Motor neuron (in vitro differentiated cells): ENCODE measurements at regions of chrX and their contacts with region 1.

Region 1: DNA sequence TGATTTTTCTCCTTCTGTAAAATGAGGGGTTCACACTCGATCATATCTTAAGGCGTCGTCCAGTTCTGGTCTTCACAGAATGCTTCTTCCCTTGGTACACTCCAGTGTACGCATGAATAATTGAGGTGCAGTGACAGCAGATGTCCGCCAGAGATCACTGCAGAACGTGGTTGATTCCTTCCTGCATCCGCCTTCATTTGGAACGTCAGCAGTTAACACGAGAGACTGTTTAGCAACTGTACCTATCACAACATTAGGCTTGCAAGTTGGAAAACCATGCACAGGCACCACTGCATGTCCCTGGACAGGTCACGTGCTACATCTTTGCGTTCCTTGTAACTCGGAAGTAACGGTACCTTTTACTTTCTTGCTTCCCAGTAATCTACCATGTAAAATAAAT is 66.0 kb upstream of the GEMIN8 start:
- ATAC-seq: peak; percentile 33 to 75 (median 62)
- H3K4me3 ChIP-seq: no peak overlapping the region
- H3K27ac ChIP-seq: no peak overlapping the region
- H3K4me1 ChIP-seq: no peaks in the 10 kb centered on the region

Region 2: GRCh38 chrX:14528629-14529289 is 433.1 kb after region 1 on chrX:
- in situ Hi-C with region 1: loop called in 1 of 9 experiments (anchors 10 kb)
- ATAC-seq: peak; percentile 72 to 92 (median 80)
- H3K4me3 ChIP-seq: peak overlapping the region; percentile 28 to 40 (median 37)
- H3K27ac ChIP-seq: peak overlapping the region in 1 of 2 donors; percentile 58
- H3K4me1 ChIP-seq: peaks cover 0 to 4% of the 10 kb centered on the region in 2 donors